Dorsolateral prefrontal cortex (tissue), 120 donors: ENCODE measurements at regions of chr11 and their contacts with region 1.

Region 1: DNA sequence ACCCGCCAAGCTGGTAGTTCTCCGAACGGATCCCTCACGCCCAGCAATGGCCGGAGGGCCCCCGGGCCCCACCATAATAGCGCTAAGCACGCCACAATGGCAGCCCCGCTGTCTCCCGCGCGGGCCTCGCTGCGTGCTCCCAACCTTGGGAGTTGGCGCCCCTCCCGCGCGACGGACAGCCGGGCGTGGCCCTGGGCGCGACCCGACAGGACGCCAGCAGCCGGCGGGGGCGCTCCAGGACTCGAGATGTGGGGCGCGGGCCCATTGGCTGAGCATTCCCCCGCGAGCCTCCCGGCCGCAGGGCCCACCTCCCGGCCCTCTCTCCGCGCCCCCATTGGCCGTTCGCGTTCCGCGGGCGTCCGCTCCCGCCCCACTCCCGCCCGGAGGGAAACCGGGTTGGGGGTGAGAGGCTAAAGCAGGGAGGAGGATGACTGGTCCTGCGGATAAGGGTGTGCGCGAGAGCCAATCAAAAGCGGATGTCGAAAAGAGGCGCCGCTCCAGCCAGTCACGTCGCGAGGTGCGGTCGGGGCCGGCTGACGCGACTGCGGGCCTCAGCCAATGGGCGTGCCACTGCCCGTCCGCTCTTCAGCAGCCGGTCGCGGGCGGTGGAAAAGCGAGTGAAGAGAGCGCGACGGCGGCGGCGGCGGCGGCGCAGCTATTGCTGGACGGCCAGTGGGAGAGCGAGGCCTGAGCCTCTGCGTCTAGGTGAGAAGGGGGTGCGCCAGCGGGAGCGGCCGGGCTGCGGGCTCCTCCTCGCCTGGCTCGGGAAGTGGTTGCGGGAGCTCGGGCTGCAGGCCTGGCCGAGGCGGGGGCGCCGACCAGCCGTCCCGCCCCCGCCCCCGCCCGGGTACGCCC is at the start of gene FAR1:
- DNase-seq: peak; percentile 93 to 99 (median 98)
- H3K4me3 ChIP-seq: peak within 1 kb of the TSS; percentile 58 to 100 (median 93)
- H3K27ac ChIP-seq: peak within 1 kb of the TSS in 58 of 59 donors; percentile 45 to 94 (median 88)
- H3K27me3 ChIP-seq: no peaks in the 10 kb centered on the region
- CTCF ChIP-seq: peak; percentile 24 to 95 (median 76)
- total RNA-seq, gene FAR1: 42.5 to 163 (median 94.1) TPM

Region 2: DNA sequence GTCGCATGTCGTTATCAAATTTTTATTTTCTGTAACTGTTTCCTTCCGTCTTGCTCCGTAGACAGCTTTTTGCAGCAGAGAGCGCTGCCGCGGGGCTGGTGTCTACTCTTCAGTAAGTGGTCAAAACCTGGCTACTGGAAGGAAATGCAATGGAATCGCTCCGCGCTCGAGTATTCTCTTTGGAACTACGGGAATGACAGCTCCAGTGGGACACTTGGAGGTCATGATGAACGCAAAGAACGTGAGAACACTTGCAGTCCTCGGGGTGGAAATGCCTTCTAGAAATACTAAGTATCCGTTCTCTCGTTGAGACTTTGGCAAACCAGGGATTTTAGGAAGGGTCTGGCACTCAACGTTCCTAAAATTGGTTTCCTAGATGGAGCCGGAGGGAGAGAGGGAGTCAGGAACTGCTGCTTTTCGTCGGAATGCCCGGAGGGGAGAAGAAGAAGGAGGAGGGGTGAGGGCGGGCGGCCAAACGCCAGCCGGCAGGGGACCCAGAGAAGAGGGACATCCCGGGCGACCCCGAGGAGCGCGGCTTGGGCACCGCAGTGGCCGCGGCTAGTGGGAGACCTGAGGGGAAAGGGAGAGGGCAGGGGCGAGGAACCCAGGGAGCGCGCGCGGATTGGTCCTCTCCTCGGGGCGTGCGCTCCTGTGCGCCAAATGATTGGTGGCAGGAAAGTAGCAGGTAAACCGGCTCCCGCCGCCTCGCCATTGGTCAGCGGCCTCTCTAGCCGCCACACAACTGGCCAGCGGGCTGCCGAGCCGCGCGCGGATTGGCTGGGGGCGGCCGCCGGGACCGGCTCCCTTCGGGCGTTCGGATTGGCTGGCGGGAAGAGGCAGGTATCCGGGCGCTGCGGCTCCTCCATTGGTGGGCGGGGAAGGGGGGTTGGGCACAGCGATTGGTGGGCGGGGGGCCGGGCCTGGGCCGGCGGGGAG is 391.2 kb before region 1 on chr11:
- intact Hi-C with region 1: loop called in 1 of 2 experiments (anchors 10 kb)
- DNase-seq: peak; percentile 87 to 99 (median 96)
- H3K4me3 ChIP-seq: peak overlapping the region; percentile 63 to 100 (median 94)
- H3K27ac ChIP-seq: peak overlapping the region; percentile 20 to 97 (median 89)
- H3K27me3 ChIP-seq: no peaks in the 10 kb centered on the region
- CTCF ChIP-seq: peak in 11 of 56 donors; percentile 3 to 42 (median 9)

Region 3: DNA sequence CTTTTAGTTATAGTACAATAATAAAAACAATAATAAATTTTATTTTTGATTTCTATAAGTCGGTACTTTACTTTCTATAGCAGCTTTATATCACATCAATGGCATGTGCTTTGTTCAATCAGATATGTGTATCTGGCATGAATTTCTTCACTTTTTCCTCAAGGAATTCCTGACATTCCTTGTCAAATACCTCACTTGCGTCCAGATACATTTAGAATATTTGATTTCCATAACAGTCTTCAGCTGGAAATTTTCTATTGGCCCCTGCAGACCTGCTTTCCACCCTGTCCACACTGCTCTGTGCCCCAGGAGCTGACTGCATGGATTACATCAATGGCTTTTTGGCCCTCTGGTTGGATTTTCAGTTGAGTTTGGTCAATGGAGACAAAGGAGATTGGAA is 93.4 kb after region 1 on chr11:
- intact Hi-C with region 1: loop called in 1 of 2 experiments (anchors 10 kb)
- DNase-seq: no peak
- H3K4me3 ChIP-seq: no peak overlapping the region
- H3K27ac ChIP-seq: no peak overlapping the region
- H3K27me3 ChIP-seq: no peaks in the 10 kb centered on the region
- CTCF ChIP-seq: no peak

Region 4: GRCh38 chr11:13772223-13773046 is 104.1 kb after region 1 on chr11:
- intact Hi-C with region 1: loop called (anchors 5 to 10 kb)
- DNase-seq: peak in 1 of 10 donors; percentile 27
- H3K4me3 ChIP-seq: no peak overlapping the region
- H3K27ac ChIP-seq: no peak overlapping the region
- H3K27me3 ChIP-seq: peaks cover 0 to 3% (median 0%) of the 10 kb centered on the region in 45 donors
- CTCF ChIP-seq: peak in 55 of 56 donors; percentile 28 to 85 (median 61)

Region 5: DNA sequence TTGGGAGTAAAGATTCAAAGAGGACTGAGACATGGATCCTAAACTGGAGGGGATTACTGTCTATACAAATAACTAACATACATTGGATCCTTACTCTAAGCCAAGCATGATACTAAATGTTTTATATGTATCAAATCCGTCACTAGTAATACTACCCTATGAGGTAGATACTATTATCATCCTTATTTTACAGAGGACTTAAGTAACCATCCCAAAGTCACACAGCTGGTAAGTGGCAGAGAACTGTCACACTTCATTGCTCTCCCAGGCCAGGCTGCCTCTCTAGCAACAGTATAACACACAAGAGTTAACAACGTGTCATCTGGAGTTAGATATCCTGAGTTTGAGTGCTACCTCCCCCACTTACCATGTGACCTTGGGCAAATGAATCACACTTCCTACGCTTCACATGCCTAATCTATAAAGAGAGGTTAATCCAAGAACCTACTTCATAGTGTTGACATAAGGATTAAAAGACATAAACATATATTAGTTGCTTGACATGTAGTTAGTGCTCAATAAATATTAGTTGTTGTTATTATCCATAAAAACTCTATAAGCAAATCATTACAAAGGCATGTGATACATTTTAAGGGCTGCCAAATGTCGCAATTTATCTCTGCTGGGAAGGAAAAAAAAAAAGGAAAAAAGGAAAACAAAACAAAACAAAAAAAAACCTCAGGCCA is 260.4 kb after region 1 on chr11:
- intact Hi-C with region 1: no loop called
- DNase-seq: no peak
- H3K4me3 ChIP-seq: no peak overlapping the region
- H3K27ac ChIP-seq: peak overlapping the region in 10 of 59 donors; percentile 1 to 61 (median 21)
- H3K27me3 ChIP-seq: no peaks in the 10 kb centered on the region
- CTCF ChIP-seq: no peak

Region 6: GRCh38 chr11:14249121-14249963 is 581.0 kb after region 1 on chr11:
- intact Hi-C with region 1: loop called in 1 of 2 experiments (anchors 5 kb)
- DNase-seq: peak in 9 of 10 donors; percentile 39 to 81 (median 57)
- H3K4me3 ChIP-seq: peak overlapping the region in 28 of 59 donors; percentile 2 to 47 (median 20)
- H3K27ac ChIP-seq: peak overlapping the region in 21 of 59 donors; percentile 4 to 75 (median 45)
- H3K27me3 ChIP-seq: peaks cover 0 to 23% (median 0%) of the 10 kb centered on the region in 45 donors
- CTCF ChIP-seq: peak; percentile 77 to 99 (median 91)